Activated CD4-positive, alpha-beta memory T cell treated with anti-CD3 and anti-CD28 coated beads, Interleukin-2, amount 10 ng/mL, durations not matched to agents 7 days and 5 days (primary cell): ENCODE measurements at regions of chr5 and their contacts with region 1.

Region 1: GRCh38 chr5:37837414-37838032 is 2.3 kb downstream of the GDNF start:
- DNase-seq: peak; percentile 68
- H3K4me3 Mint-ChIP-seq: peak overlapping the region; percentile 18
- H3K27ac Mint-ChIP-seq: no peak overlapping the region
- H3K4me1 Mint-ChIP-seq: peaks cover 37% of the 10 kb centered on the region
- H3K27me3 Mint-ChIP-seq: peaks cover 84% of the 10 kb centered on the region

Region 2: DNA sequence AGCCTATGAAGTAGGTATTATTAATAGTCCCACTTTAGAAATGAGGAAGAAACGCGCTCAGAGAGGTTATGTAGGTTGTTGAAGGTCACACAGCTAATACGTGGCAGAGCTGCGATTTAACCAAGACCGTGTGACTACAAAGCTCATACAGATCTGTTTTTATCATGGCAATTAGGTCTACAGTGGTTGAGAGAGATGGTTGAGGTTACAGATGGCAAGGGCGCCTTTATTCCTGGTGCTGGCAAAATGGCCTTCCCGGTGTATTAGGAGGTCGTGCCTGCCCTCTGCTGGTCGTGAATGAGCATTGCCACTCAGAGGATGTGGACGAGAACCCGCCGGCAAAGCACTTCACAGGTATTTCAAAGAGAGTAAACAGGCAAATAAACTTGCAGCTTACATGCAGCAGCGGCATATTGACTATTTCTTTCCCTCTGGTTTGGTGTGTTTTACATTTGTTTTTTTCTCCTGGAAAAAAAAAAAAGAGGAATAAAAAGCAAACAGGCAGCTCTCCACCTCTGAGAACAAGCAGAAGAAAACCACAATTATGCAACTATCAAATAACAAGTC is 355.6 kb after region 1 on chr5:
- CTCF ChIA-PET with region 1: interaction called, 17 read pairs
- POLR2A ChIA-PET with region 1: no interaction called
- DNase-seq: peak; percentile 64
- H3K4me3 Mint-ChIP-seq: no peak overlapping the region
- H3K27ac Mint-ChIP-seq: no peak overlapping the region
- H3K4me1 Mint-ChIP-seq: no peaks in the 10 kb centered on the region
- H3K27me3 Mint-ChIP-seq: peaks cover 19% of the 10 kb centered on the region